ENCODE measurements at regions of chr2 and their contacts with region 1.

Region 1: DNA sequence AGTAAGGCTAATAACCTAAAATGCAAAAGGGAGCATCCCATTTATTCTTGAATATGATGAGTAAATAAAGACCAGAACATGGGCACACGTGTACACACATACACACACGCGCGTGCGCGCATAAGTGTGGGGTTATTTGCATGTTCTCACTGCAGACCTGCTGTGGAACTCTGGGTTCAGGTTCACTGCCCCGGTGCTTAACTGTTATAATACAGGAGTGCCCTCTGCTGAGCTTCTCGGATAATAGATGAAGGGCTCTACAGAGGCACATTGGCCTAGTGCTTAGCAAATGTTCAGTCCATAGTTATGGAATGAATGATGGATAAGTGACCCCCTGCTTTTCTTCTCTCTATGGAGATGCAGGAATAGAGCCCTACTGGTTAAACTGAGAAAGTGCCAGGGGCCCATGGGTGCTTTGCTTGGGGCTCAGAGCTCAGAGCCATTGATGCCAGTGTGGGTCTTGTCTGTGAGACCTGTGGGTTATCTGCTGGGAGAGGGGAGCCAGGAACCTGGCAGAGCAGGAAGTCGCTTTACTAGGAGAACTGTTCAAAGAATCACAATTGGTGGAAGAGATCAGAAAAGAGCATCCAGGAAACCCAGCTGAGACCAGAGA is 3.6 kb upstream of the ARL4C start:
- DNase-seq: peak; percentile 59 to 91 (median 72)
- ATAC-seq: peak; percentile 46
- H3K4me3 ChIP-seq: no peak overlapping the region
- H3K4me3 Mint-ChIP-seq: peak overlapping the region; percentile 79
- H3K27ac ChIP-seq: no peak overlapping the region
- H3K27ac Mint-ChIP-seq: peak overlapping the region; percentile 96
- H3K4me1 ChIP-seq: peaks cover 29% of the 10 kb centered on the region
- H3K4me1 Mint-ChIP-seq: peaks cover 32% of the 10 kb centered on the region
- H3K27me3 ChIP-seq: no peaks in the 10 kb centered on the region
- H3K27me3 Mint-ChIP-seq: no peaks in the 10 kb centered on the region
- CTCF ChIP-seq: peak; percentile 80

Region 2: GRCh38 chr2:233854241-233854981 is 646.1 kb before region 1 on chr2 and contains the start of gene HJURP:
- CTCF ChIA-PET with region 1: no interaction called
- POLR2A ChIA-PET with region 1: no interaction called
- intact Hi-C with region 1: loop called (anchors 1 to 2 kb)
- DNase-seq: peak; percentile 76 to 96 (median 82)
- ATAC-seq: peak; percentile 97
- H3K4me3 ChIP-seq: peak within 1 kb of the TSS; percentile 83
- H3K4me3 Mint-ChIP-seq: peak within 1 kb of the TSS; percentile 88
- H3K27ac ChIP-seq: no peak within 1 kb of the TSS
- H3K27ac Mint-ChIP-seq: peak within 1 kb of the TSS; percentile 21
- H3K4me1 ChIP-seq: peaks cover 21% of the 10 kb centered on the region
- H3K4me1 Mint-ChIP-seq: peaks cover 32% of the 10 kb centered on the region
- H3K27me3 ChIP-seq: peaks cover 4 to 9% of the 10 kb centered on the region in 2 experiments
- H3K27me3 Mint-ChIP-seq: peaks cover 16% of the 10 kb centered on the region
- CTCF ChIP-seq: no peak
- total RNA-seq, gene HJURP: 0.22 to 0.25 TPM

Region 3: DNA sequence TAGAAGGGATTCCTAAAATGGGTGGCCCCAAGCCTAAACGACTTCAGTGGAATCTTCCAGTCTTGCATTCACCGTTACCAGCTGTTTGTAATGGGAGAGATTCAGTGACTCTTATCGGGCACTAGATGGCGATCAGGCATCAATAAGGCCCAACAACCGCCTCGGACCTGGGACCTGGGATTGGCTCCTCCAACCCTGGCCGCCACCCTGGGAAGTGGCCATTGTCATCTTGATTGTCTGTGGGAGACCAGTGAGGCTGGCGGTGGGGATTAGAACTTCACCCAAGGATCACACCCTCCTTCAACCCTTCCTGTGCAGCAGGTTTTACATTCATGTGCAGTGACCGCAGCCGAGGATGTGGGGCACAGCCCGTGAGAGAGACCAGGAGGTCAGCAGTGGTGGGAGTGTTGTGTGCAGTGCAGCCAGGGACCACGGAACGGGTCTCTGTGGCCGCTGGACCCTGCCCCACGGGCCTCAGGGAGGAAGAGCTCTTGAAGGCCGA is 364.7 kb before region 1 on chr2:
- CTCF ChIA-PET with region 1: interaction called, 16 read pairs
- POLR2A ChIA-PET with region 1: interaction called, 16 read pairs
- intact Hi-C with region 1: loop called (anchors 1 kb)
- DNase-seq: peak; percentile 23 to 77 (median 32)
- ATAC-seq: peak; percentile 66
- H3K4me3 ChIP-seq: no peak overlapping the region
- H3K4me3 Mint-ChIP-seq: no peak overlapping the region
- H3K27ac ChIP-seq: no peak overlapping the region
- H3K27ac Mint-ChIP-seq: peak overlapping the region; percentile 63
- H3K4me1 ChIP-seq: peaks cover 32% of the 10 kb centered on the region
- H3K4me1 Mint-ChIP-seq: peaks cover 37% of the 10 kb centered on the region
- H3K27me3 ChIP-seq: no peaks in the 10 kb centered on the region
- H3K27me3 Mint-ChIP-seq: no peaks in the 10 kb centered on the region
- CTCF ChIP-seq: peak; percentile 84

Region 4: GRCh38 chr2:234318361-234318760 is 182.1 kb before region 1 on chr2:
- CTCF ChIA-PET with region 1: no interaction called
- POLR2A ChIA-PET with region 1: no interaction called
- intact Hi-C with region 1: no loop called
- DNase-seq: no peak
- ATAC-seq: no peak
- H3K4me3 ChIP-seq: no peak overlapping the region
- H3K4me3 Mint-ChIP-seq: no peak overlapping the region
- H3K27ac ChIP-seq: no peak overlapping the region
- H3K27ac Mint-ChIP-seq: no peak overlapping the region
- H3K4me1 ChIP-seq: peaks cover 4% of the 10 kb centered on the region
- H3K4me1 Mint-ChIP-seq: peaks cover 44% of the 10 kb centered on the region
- H3K27me3 ChIP-seq: no peaks in the 10 kb centered on the region
- H3K27me3 Mint-ChIP-seq: no peaks in the 10 kb centered on the region
- CTCF ChIP-seq: no peak

Region 5: DNA sequence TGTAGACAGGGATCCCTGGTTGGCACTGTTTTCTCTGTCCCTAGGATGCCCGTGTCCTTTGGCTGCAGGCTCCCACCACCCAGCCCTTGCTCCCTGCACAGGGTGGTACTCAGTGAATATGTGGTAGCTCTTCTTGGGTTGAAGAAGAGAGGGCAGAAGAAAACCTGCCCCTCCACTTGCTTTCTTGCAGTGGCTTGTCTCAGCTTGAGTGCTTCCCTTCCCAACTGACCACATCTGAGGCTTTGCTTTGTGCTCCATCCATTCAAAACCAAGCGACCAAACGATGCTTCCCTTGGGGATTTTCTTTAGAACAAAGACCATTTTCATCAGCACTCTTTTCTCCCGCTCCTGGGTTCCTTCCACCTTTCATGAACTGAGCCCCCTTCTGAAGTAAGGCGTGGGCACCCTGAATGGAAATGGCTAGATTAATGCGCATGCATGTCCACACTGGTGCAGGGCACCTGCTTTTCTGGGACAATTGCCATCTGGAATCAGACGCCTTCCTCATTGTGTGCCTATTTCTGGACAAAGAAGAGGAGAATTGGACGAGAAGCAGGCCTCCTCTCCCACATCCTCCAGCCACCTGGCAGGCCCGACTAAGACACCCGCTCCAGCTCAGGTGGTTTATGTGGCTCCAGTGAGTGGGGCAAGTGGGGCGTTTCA is 62.7 kb before region 1 on chr2:
- CTCF ChIA-PET with region 1: interaction called, 3 read pairs
- POLR2A ChIA-PET with region 1: interaction called, 13 read pairs
- intact Hi-C with region 1: no loop called
- DNase-seq: no peak
- ATAC-seq: peak; percentile 30
- H3K4me3 ChIP-seq: peak overlapping the region; percentile 6
- H3K4me3 Mint-ChIP-seq: peak overlapping the region; percentile 45
- H3K27ac ChIP-seq: peak overlapping the region; percentile 70 to 73
- H3K27ac Mint-ChIP-seq: peak overlapping the region; percentile 87
- H3K4me1 ChIP-seq: peaks cover 69% of the 10 kb centered on the region
- H3K4me1 Mint-ChIP-seq: peaks cover 89% of the 10 kb centered on the region
- H3K27me3 ChIP-seq: no peaks in the 10 kb centered on the region
- H3K27me3 Mint-ChIP-seq: no peaks in the 10 kb centered on the region
- CTCF ChIP-seq: no peak

Region 6: GRCh38 chr2:234483568-234484251 is 16.8 kb before region 1 on chr2:
- CTCF ChIA-PET with region 1: interaction called, 6 read pairs
- POLR2A ChIA-PET with region 1: interaction called, 33 read pairs
- intact Hi-C with region 1: no loop called
- DNase-seq: peak; percentile 62 to 96 (median 78)
- ATAC-seq: peak; percentile 76
- H3K4me3 ChIP-seq: peak overlapping the region; percentile 19
- H3K4me3 Mint-ChIP-seq: peak overlapping the region; percentile 68
- H3K27ac ChIP-seq: peak overlapping the region; percentile 68 to 81
- H3K27ac Mint-ChIP-seq: peak overlapping the region; percentile 98
- H3K4me1 ChIP-seq: peaks cover 74% of the 10 kb centered on the region
- H3K4me1 Mint-ChIP-seq: peaks cover 94% of the 10 kb centered on the region
- H3K27me3 ChIP-seq: no peaks in the 10 kb centered on the region
- H3K27me3 Mint-ChIP-seq: no peaks in the 10 kb centered on the region
- CTCF ChIP-seq: peak; percentile 80

Region 7: GRCh38 chr2:234823877-234824376 is 323.4 kb after region 1 on chr2:
- CTCF ChIA-PET with region 1: no interaction called
- POLR2A ChIA-PET with region 1: no interaction called
- intact Hi-C with region 1: no loop called
- DNase-seq: no peak
- ATAC-seq: no peak
- H3K4me3 ChIP-seq: no peak overlapping the region
- H3K4me3 Mint-ChIP-seq: no peak overlapping the region
- H3K27ac ChIP-seq: no peak overlapping the region
- H3K27ac Mint-ChIP-seq: no peak overlapping the region
- H3K4me1 ChIP-seq: no peaks in the 10 kb centered on the region
- H3K4me1 Mint-ChIP-seq: no peaks in the 10 kb centered on the region
- H3K27me3 ChIP-seq: peaks cover 0 to 4% of the 10 kb centered on the region in 2 experiments
- H3K27me3 Mint-ChIP-seq: no peaks in the 10 kb centered on the region
- CTCF ChIP-seq: no peak

Region 8: DNA sequence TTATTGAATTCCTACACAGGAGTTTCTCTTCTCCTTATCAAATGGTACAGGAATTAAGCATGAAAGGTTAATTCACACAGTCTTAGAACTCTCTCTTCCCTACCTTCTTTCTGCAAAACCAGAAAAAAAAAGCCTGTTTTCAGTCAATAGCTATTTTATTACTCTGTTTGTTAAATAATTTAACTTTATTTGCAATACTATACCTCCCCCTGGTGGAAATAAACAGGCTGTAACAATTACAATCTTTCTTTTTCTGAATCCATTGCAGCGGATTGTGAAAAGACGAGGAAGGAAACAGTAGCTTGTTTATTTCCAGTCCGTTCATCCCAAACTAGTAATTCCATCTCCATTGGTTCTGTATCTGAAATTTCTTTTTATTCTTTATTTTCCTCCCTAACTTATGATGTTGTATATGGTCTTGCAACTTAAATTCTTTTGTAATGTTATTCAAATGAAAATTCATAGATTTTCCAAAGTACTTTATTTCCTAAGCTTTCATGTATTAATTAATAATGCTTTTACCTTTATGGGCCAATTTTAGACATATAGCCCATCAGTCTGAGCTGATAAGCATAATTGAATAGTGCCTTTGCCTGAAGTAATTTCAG is 616.5 kb after region 1 on chr2:
- CTCF ChIA-PET with region 1: no interaction called
- POLR2A ChIA-PET with region 1: no interaction called
- intact Hi-C with region 1: no loop called
- DNase-seq: peak in 3 of 14 experiments; percentile 22 to 34 (median 34)
- ATAC-seq: no peak
- H3K4me3 ChIP-seq: no peak overlapping the region
- H3K4me3 Mint-ChIP-seq: no peak overlapping the region
- H3K27ac ChIP-seq: no peak overlapping the region
- H3K27ac Mint-ChIP-seq: no peak overlapping the region
- H3K4me1 ChIP-seq: no peaks in the 10 kb centered on the region
- H3K4me1 Mint-ChIP-seq: no peaks in the 10 kb centered on the region
- H3K27me3 ChIP-seq: peaks cover 0 to 5% of the 10 kb centered on the region in 2 experiments
- H3K27me3 Mint-ChIP-seq: peaks cover 32% of the 10 kb centered on the region
- CTCF ChIP-seq: peak; percentile 58